ENCODE measurements at regions of chr16 and their contacts with region 1.

Region 1: GRCh38 chr16:69732101-69732500 is 5.7 kb upstream of the NQO1 start:
- DNase-seq: no peak
- H3K4me3 ChIP-seq: no peak overlapping the region
- H3K27ac ChIP-seq: no peak overlapping the region
- H3K4me1 ChIP-seq: peaks cover 0 to 6% (median 4%) of the 10 kb centered on the region in 4 experiments; a peak in 3 of 7 replicates
- H3K27me3 ChIP-seq: no peaks in the 10 kb centered on the region
- CTCF ChIP-seq: no peak
- EP300 ChIP-seq: no peak
- POLR2A ChIP-seq: no peak
- RAD21 ChIP-seq: no peak

Region 2: DNA sequence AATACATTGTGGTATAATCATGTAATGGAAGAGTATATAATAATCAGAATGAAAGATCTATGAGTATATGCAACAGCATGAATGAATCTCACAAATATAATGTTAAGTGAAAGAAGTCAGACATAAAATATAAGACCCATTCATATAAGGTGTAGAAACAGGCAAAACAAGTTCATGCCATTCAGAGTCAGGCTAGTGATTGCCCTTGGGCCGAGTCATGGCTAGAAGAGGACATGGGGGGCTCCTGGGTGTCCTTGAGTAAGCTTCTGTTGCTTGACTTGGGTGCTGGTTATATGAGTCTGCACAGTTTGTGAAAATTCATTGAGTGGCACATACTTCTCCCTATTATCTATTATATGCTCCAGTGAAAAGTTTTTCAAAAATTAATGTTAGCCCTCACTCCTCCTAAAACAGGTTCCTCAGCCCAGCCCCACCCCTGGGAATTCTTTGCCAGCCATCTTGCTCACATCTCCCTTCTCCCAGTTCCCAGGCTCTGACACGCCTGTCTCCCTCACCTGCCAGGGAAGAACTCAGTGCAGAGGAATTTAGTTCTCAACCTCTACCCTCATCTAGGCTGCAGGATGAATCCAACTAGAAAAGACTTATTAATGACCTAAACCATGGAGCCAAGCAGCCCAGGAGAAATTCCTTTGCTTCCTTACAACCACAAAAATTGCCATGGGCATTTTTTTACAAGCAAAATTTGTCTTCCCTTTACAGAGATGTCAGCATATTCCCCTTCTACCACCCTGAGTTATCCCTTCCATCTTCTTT is 218.7 kb before region 1 on chr16:
- CTCF ChIA-PET with region 1: no interaction called
- POLR2A ChIA-PET with region 1: no interaction called
- DNase-seq: no peak
- H3K4me3 ChIP-seq: no peak overlapping the region
- H3K27ac ChIP-seq: no peak overlapping the region
- H3K4me1 ChIP-seq: no peaks in the 10 kb centered on the region
- H3K27me3 ChIP-seq: no peaks in the 10 kb centered on the region
- CTCF ChIP-seq: no peak
- EP300 ChIP-seq: no peak
- POLR2A ChIP-seq: no peak
- RAD21 ChIP-seq: no peak

Region 3: GRCh38 chr16:69554495-69554894 is 177.6 kb before region 1 on chr16:
- CTCF ChIA-PET with region 1: no interaction called
- POLR2A ChIA-PET with region 1: no interaction called
- DNase-seq: no peak
- H3K4me3 ChIP-seq: no peak overlapping the region
- H3K27ac ChIP-seq: no peak overlapping the region
- H3K4me1 ChIP-seq: peaks cover 0 to 3% (median 1%) of the 10 kb centered on the region in 4 experiments; a peak in 2 of 7 replicates
- H3K27me3 ChIP-seq: no peaks in the 10 kb centered on the region
- CTCF ChIP-seq: no peak
- EP300 ChIP-seq: no peak
- POLR2A ChIP-seq: no peak
- RAD21 ChIP-seq: no peak

Region 4: GRCh38 chr16:69651217-69651616 is 80.9 kb before region 1 on chr16:
- CTCF ChIA-PET with region 1: no interaction called
- POLR2A ChIA-PET with region 1: no interaction called
- DNase-seq: no peak
- H3K4me3 ChIP-seq: no peak overlapping the region
- H3K27ac ChIP-seq: no peak overlapping the region
- H3K4me1 ChIP-seq: no peaks in the 10 kb centered on the region; a peak in 1 of 7 replicates
- H3K27me3 ChIP-seq: no peaks in the 10 kb centered on the region
- CTCF ChIP-seq: no peak
- EP300 ChIP-seq: no peak
- POLR2A ChIP-seq: no peak
- RAD21 ChIP-seq: no peak

Region 5: DNA sequence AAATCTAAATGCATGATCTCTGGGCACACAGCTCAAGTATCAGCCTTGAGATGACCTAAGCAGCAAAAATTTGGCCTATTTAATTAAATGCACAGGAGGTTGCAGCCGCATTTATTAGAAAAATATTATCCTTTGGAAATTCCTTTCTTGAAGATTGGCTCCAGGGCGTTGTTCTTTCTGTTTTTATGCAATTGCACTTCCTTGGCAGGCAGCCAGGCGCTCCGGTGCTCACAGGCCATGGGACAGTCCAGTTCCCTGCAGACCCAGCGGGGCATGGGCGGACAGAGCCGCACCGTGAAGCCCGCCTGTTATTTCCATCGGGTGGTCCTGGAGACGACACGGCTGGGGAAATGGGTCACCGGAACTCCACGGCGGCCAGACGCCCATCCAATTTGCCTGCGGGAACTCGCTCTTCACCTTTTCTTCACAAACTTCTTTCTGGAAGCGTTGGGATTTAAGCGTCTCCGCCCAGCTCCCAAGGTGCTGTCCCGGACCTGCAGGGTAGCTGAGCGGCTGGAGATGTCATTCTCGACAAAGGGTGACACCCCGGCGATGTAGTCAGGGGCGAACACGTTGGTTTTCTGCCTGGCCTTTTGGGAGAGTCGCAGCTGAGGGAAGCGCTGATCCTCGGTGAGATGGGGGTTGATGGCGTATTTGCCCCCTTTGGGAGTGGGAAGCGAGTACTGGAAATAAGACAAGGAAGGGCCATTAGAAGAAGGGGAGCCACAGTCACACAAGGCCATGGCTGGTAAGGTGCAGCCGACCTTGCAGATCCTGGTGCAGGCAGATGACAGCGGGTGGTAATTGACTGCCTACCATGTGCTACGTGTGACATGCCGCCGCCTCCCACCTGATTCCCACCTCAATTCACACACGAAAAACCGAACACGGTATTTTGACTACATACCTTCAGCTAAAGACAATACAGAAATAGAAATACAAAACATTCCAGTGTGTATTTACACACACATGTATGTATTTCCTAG is 10.1 kb after region 1 on chr16:
- CTCF ChIA-PET with region 1: interaction called, 5 read pairs
- POLR2A ChIA-PET with region 1: interaction called, 63 read pairs
- DNase-seq: no peak
- H3K4me3 ChIP-seq: no peak overlapping the region
- H3K27ac ChIP-seq: no peak overlapping the region
- H3K4me1 ChIP-seq: no peaks in the 10 kb centered on the region
- H3K27me3 ChIP-seq: no peaks in the 10 kb centered on the region
- CTCF ChIP-seq: no peak
- EP300 ChIP-seq: no peak
- POLR2A ChIP-seq: no peak
- RAD21 ChIP-seq: no peak

Region 6: DNA sequence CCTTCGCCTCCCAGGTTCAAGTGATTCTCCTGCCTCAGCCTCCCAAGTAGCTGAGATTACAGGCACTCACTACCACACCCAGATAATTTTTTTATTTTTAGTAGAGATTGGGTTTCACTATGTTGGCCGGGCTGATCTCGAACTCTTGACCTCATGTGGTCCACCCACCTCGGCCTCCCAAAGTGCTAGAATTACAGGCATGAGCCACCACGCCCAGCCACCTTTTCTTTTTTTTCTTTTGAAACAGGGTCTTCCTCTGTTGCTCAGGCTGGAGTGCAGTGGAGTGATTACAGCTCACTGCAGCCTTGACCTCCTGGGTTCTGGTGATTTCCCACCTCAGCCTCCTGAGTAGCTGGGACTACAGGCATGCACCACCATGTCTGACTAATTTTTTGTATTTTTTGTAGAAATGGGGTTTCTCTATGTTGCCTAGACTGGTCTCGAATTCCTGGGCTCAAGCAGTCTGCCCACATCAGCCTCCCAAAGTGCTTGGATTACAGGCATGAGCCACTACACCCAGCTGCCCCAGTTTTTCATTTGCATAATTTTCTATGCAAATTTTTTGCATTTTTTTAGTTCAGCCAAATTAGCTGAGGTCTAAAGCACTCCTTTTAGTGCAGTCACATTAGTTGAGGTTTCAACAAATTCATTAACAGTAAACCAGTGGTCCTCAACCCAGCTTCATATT is 41.3 kb after region 1 on chr16:
- CTCF ChIA-PET with region 1: no interaction called
- POLR2A ChIA-PET with region 1: no interaction called
- DNase-seq: no peak
- H3K4me3 ChIP-seq: no peak overlapping the region
- H3K27ac ChIP-seq: no peak overlapping the region
- H3K4me1 ChIP-seq: no peaks in the 10 kb centered on the region
- H3K27me3 ChIP-seq: no peaks in the 10 kb centered on the region
- CTCF ChIP-seq: no peak
- EP300 ChIP-seq: no peak
- POLR2A ChIP-seq: no peak
- RAD21 ChIP-seq: no peak